Activated CD8-positive, alpha-beta T cell treated with anti-CD3 and anti-CD28 coated beads for 36 hours (primary cell): ENCODE measurements at regions of chr3 and their contacts with region 1.

Region 1: GRCh38 chr3:53254509-53255422 is 1.1 kb downstream of the TKT start:
- DNase-seq: peak; percentile 75
- ATAC-seq: peak; percentile 59
- H3K4me3 Mint-ChIP-seq: peak overlapping the region; percentile 93
- H3K27ac Mint-ChIP-seq: peak overlapping the region; percentile 81
- H3K4me1 Mint-ChIP-seq: peaks cover 41% of the 10 kb centered on the region
- H3K27me3 Mint-ChIP-seq: no peaks in the 10 kb centered on the region
- CTCF ChIP-seq: no peak

Region 2: DNA sequence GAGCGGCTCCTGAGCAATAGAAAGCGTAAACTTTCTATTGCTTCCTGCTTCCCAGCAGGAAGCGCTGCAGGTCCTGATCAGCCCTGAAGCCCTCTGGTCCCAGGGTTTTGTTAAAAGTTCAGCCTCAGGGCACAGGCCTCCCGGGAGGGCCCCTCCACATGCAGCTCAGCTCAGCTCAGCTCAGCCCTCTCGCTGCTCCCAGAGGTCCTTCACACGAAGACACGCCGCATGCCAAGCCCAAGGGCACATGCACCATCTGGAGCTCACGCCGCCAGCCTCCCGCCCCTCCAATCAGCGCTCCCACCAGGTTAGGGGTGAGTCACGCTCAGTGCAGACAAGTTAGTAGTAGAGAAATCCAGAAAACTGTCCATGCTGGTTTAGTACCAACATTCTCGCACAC is 11.6 kb before region 1 on chr3:
- CTCF ChIA-PET with region 1: no interaction called
- POLR2A ChIA-PET with region 1: interaction called, 20 read pairs
- intact Hi-C with region 1: no loop called
- DNase-seq: no peak
- ATAC-seq: no peak
- H3K4me3 Mint-ChIP-seq: no peak overlapping the region
- H3K27ac Mint-ChIP-seq: no peak overlapping the region
- H3K4me1 Mint-ChIP-seq: peaks cover 17% of the 10 kb centered on the region
- H3K27me3 Mint-ChIP-seq: no peaks in the 10 kb centered on the region
- CTCF ChIP-seq: no peak